A549 (cell line): ENCODE measurements at regions of chr9 and their contacts with region 1.

Region 1: GRCh38 chr9:124708633-124709291 is 62.3 kb downstream of the NR6A1 start:
- DNase-seq: peak in 1 of 2 experiments; percentile 41
- ATAC-seq: peak in 1 of 2 experiments; percentile 66; a peak in 3 of 6 replicates
- H3K4me3 ChIP-seq: no peak overlapping the region
- H3K27ac ChIP-seq: peak overlapping the region in 1 of 2 experiments; percentile 47; a peak in 2 of 6 replicates
- H3K4me1 ChIP-seq: peaks cover 21% of the 10 kb centered on the region
- CTCF ChIP-seq: no peak
- EP300 ChIP-seq: no peak
- POLR2A ChIP-seq: no peak
- RAD21 ChIP-seq: no peak

Region 2: GRCh38 chr9:124537926-124538325 is 170.8 kb before region 1 on chr9:
- CTCF ChIA-PET with region 1: interaction called, 13 read pairs
- POLR2A ChIA-PET with region 1: no interaction called
- DNase-seq: no peak
- ATAC-seq: no peak
- H3K4me3 ChIP-seq: no peak overlapping the region
- H3K27ac ChIP-seq: no peak overlapping the region
- H3K4me1 ChIP-seq: no peaks in the 10 kb centered on the region
- CTCF ChIP-seq: no peak
- EP300 ChIP-seq: no peak
- POLR2A ChIP-seq: no peak
- RAD21 ChIP-seq: no peak

Region 3: GRCh38 chr9:124602204-124602603 is 106.6 kb before region 1 on chr9:
- CTCF ChIA-PET with region 1: interaction called, 15 read pairs
- POLR2A ChIA-PET with region 1: no interaction called
- DNase-seq: peak in 1 of 2 experiments; percentile 23
- ATAC-seq: no peak
- H3K4me3 ChIP-seq: no peak overlapping the region
- H3K27ac ChIP-seq: no peak overlapping the region
- H3K4me1 ChIP-seq: peaks cover 9% of the 10 kb centered on the region; the same call in 2 of the 3 replicates
- CTCF ChIP-seq: no peak
- EP300 ChIP-seq: no peak
- POLR2A ChIP-seq: no peak
- RAD21 ChIP-seq: no peak

Region 4: GRCh38 chr9:124697326-124698200 is 11.2 kb before region 1 on chr9:
- CTCF ChIA-PET with region 1: interaction called, 17 read pairs
- POLR2A ChIA-PET with region 1: no interaction called
- DNase-seq: peak in 1 of 2 experiments; percentile 7
- ATAC-seq: peak in 1 of 2 experiments; percentile 56; a peak in 3 of 6 replicates
- H3K4me3 ChIP-seq: no peak overlapping the region
- H3K27ac ChIP-seq: peak overlapping the region in 1 of 2 experiments; percentile 78; a peak in 2 of 6 replicates
- H3K4me1 ChIP-seq: peaks cover 51% of the 10 kb centered on the region
- CTCF ChIP-seq: no peak
- EP300 ChIP-seq: no peak
- POLR2A ChIP-seq: no peak
- RAD21 ChIP-seq: no peak

Region 5: DNA sequence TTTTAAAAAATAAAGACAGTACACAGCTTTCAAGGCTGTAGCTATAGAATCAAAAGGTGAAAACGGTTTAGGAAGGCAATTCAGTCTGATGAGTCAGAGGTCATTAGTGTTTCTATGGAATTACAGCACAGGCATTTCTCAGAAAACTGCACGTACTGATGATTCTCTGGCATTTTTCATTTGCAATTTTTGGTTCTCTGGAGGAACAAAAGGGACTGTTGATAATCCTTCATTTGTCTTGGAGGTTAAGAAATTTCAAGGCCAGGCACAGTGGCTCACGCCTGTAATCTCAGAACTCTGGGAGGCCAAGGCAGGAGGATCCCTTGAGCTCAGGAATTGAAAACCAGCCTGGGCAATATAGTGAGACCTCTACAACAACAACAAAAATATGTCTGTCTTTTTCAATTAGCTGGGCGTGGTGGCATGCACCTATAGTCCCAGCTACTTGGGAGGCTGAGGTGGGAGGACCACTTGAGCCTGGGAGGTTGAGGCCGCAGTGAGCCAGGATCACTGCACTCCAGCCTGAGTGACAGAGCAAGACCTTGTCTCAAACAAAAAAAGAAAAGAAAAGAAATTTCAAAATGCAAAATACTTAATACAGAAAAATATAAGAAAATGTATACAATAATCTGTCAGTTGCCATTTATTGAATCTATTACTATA is 35.1 kb after region 1 on chr9:
- CTCF ChIA-PET with region 1: interaction called, 166 read pairs
- POLR2A ChIA-PET with region 1: no interaction called
- DNase-seq: no peak
- ATAC-seq: no peak
- H3K4me3 ChIP-seq: no peak overlapping the region
- H3K27ac ChIP-seq: no peak overlapping the region
- H3K4me1 ChIP-seq: peaks cover 8% of the 10 kb centered on the region; the same call in 2 of the 3 replicates
- CTCF ChIP-seq: no peak
- EP300 ChIP-seq: no peak
- POLR2A ChIP-seq: no peak
- RAD21 ChIP-seq: no peak

Region 6: GRCh38 chr9:124852829-124853531 is 144.2 kb after region 1 on chr9 and contains the start of gene WDR38:
- CTCF ChIA-PET with region 1: interaction called, 11 read pairs
- POLR2A ChIA-PET with region 1: no interaction called
- DNase-seq: peak; percentile 87 to 98
- ATAC-seq: peak; percentile 73 to 85
- H3K4me3 ChIP-seq: peak within 1 kb of the TSS; percentile 45
- H3K27ac ChIP-seq: peak within 1 kb of the TSS; percentile 53 to 81
- H3K4me1 ChIP-seq: peaks cover 30% of the 10 kb centered on the region
- CTCF ChIP-seq: peak; percentile 100
- EP300 ChIP-seq: no peak
- POLR2A ChIP-seq: no peak
- RAD21 ChIP-seq: peak; percentile 93 to 100
- polyA plus RNA-seq, gene WDR38: not detected in 2 replicates